Dorsolateral prefrontal cortex (tissue), 120 donors: ENCODE measurements at regions of chr2 and their contacts with region 1.

Region 1: GRCh38 chr2:214410918-214411554 is at the start of gene VWC2L:
- DNase-seq: peak; percentile 34 to 88 (median 84)
- H3K4me3 ChIP-seq: peak within 1 kb of the TSS in 58 of 59 donors; percentile 14 to 68 (median 48)
- H3K27ac ChIP-seq: peak within 1 kb of the TSS in 45 of 59 donors; percentile 1 to 76 (median 46)
- H3K27me3 ChIP-seq: no peaks in the 10 kb centered on the region
- CTCF ChIP-seq: peak in 27 of 56 donors; percentile 2 to 51 (median 20)
- total RNA-seq, gene VWC2L: 2.7 to 14.0 (median 7.4) TPM

Region 2: DNA sequence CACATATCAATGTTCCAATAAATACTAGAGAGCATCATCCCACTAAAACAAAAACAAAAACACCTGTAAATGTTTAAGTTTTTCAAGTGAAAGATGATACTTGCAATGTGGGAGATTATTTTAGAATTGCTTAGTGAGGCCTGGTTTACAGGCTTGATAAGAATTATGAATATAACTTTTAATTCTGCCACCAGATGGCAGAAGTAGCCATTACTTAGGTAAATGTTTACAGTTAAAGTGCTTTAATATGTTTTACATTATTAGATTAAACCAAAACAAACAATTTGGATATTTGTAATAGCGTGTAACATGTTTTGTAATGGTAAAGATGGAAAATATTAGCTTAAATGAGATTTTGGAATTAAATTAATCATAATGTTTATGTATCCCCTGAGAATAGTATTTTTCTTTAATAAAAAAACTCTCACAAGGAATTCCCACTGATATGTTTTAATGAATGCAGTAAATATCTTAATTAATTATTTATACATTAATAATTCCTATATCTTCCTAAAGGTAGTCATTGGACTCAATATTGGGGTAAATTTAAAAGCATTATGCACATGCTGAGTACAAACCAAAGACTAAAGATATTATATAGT is 604.8 kb before region 1 on chr2:
- intact Hi-C with region 1: loop called (anchors 2 to 5 kb)
- DNase-seq: no peak
- H3K4me3 ChIP-seq: no peak overlapping the region
- H3K27ac ChIP-seq: no peak overlapping the region
- H3K27me3 ChIP-seq: no peaks in the 10 kb centered on the region
- CTCF ChIP-seq: peak; percentile 36 to 81 (median 62)

Region 3: GRCh38 chr2:214310319-214310718 is 100.7 kb before region 1 on chr2:
- intact Hi-C with region 1: loop called in 1 of 2 experiments (anchors 2 kb)
- DNase-seq: no peak
- H3K4me3 ChIP-seq: no peak overlapping the region
- H3K27ac ChIP-seq: no peak overlapping the region
- H3K27me3 ChIP-seq: no peaks in the 10 kb centered on the region
- CTCF ChIP-seq: peak in 40 of 56 donors; percentile 9 to 63 (median 32)

Region 4: GRCh38 chr2:214569419-214570035 is 158.5 kb after region 1 on chr2:
- intact Hi-C with region 1: no loop called
- DNase-seq: no peak
- H3K4me3 ChIP-seq: no peak overlapping the region
- H3K27ac ChIP-seq: no peak overlapping the region
- H3K27me3 ChIP-seq: no peaks in the 10 kb centered on the region
- CTCF ChIP-seq: no peak